ENCODE measurements at regions of chr11 and their contacts with region 1.

Region 1: GRCh38 chr11:83071567-83072349 is at the start of gene RAB30:
- DNase-seq: peak; percentile 99
- H3K4me3 ChIP-seq: peak within 1 kb of the TSS; percentile 86
- H3K27ac ChIP-seq: peak within 1 kb of the TSS; percentile 70
- H3K4me1 ChIP-seq: peaks cover 40% of the 10 kb centered on the region
- CTCF ChIP-seq: no peak
- total RNA-seq, gene RAB30: 27.1 and 33.3 TPM in 2 replicates

Region 2: DNA sequence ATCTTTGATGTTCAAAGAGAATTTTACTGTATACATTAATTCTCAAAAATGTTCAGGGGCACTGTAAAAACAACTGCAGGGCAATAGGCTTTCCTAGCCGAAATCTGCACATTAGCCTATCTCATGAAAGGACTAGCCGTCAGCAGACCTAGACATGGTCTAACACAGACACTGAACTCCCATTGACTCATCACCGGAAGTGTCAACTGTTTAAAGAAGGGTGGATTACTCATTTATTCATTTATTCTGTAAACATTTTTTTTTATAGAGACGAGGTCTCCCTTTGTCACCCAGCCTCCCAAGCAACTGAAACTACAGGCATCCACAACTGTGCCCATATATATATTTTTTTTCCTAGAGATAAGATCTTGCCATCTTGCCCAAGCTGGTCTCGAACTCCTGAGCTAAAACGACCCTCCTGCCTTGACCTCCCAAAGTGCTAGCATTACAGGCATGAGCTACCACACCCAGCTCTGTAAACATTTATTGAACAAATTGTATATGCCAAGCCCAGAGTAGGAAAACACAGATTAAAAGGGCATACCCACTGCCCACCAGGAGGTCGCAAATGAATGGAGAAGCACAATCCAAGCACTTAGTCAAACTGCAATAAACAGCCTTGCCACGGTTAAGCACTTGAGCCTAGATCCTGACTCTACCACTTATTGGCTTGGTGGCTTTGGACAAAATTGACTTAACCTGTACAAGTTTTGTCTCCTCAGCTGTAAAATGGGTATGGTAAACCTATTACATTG is 26.6 kb before region 1 on chr11:
- CTCF ChIA-PET with region 1: interaction called, 3 read pairs
- POLR2A ChIA-PET with region 1: interaction called, 10 read pairs
- intact Hi-C with region 1: no loop called
- DNase-seq: peak; percentile 53
- H3K4me3 ChIP-seq: peak overlapping the region; percentile 9
- H3K27ac ChIP-seq: no peak overlapping the region
- H3K4me1 ChIP-seq: peaks cover 64% of the 10 kb centered on the region
- CTCF ChIP-seq: no peak

Measured in OCI-LY7 (cell line).